MCF 10A (cell line): ENCODE measurements at regions of chr2 and their contacts with region 1.

Region 1: GRCh38 chr2:26299471-26300101 is 46.4 kb upstream of the SELENOI start:
- DNase-seq: peak; percentile 52
- H3K4me3 Mint-ChIP-seq: no peak overlapping the region
- H3K27ac Mint-ChIP-seq: no peak overlapping the region
- H3K4me1 Mint-ChIP-seq: peaks cover 13% of the 10 kb centered on the region
- H3K27me3 Mint-ChIP-seq: no peaks in the 10 kb centered on the region
- CTCF ChIP-seq: no peak

Region 2: GRCh38 chr2:26284136-26284535 is 15.4 kb before region 1 on chr2:
- CTCF ChIA-PET with region 1: no interaction called
- POLR2A ChIA-PET with region 1: interaction called, 32 read pairs
- intact Hi-C with region 1: no loop called
- DNase-seq: peak; percentile 64
- H3K4me3 Mint-ChIP-seq: peak overlapping the region; percentile 22
- H3K27ac Mint-ChIP-seq: peak overlapping the region; percentile 47
- H3K4me1 Mint-ChIP-seq: peaks cover 20% of the 10 kb centered on the region
- H3K27me3 Mint-ChIP-seq: no peaks in the 10 kb centered on the region
- CTCF ChIP-seq: no peak